Heart left ventricle (tissue), 16 donors: ENCODE measurements at regions of chr10 and their contacts with region 1.

Region 1: DNA sequence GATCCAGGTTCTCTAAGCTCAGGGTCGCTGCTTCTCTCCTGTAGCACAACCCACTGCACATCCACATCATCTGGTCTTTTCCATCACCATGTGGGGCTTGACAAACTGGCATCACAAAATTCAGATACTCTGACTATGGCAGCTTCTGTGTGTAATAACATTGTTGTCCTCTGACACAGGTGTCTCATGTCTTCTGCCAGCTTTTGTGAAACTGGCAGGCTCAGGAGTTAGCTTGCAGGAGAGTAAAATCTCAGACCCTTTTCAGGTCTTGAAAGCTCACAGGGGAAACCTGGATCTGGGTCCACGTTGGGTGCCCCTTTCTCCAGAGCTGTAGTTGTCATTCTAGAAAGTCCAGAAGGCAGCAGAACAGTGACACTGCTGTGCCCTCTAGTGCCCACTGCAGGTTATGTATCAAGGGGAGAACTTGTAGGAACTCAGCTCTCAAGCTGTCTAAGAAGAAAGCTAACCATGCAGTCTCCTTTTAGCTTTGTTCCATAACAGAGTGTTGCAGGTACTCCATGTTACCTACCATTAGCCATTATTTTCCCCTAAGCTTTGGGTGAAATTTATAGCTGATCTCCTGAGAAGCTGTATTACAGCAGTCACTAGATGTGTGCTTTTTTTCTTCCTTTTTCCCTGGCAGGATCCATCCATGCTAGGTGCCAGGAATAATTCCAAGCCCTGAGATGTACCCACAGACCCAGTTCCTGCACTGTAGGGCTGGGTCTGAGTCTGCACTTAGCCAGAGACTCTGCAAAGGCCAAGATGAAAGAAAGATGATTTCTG is 102.7 kb downstream of the ZNF248 start:
- DNase-seq: no peak
- ATAC-seq: peak in 3 of 4 donors; percentile 63 to 73 (median 64)
- H3K4me3 ChIP-seq: no peak overlapping the region
- H3K27ac ChIP-seq: no peak overlapping the region
- H3K4me1 ChIP-seq: no peaks in the 10 kb centered on the region
- H3K27me3 ChIP-seq: no peaks in the 10 kb centered on the region
- CTCF ChIP-seq: peak; percentile 36 to 63 (median 50)
- POLR2A ChIP-seq: no peak

Region 2: DNA sequence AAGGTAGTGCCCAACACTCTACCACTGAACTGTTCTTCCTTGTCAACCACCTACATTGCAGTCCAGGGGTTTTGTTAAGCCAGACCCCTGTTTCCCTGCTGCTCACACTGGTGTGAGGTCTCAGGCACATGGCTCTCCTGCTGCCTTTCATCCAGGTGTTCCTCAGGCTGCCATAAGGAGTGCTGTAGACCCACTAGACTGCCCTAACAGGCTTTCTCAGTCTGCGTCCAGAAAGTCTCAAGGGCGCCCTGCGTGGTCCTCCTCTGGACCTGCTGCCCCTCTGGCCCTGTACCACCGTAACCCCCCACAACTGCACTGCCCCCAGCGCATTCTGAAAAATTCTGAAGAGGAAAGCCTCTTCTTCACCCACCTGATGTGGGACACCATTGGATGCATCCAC is 855.1 kb before region 1 on chr10:
- intact Hi-C with region 1: loop called in 5 of 10 experiments (anchors 5 to 10 kb)
- DNase-seq: no peak
- ATAC-seq: no peak
- H3K4me3 ChIP-seq: no peak overlapping the region
- H3K27ac ChIP-seq: no peak overlapping the region
- H3K4me1 ChIP-seq: no peaks in the 10 kb centered on the region
- H3K27me3 ChIP-seq: no peaks in the 10 kb centered on the region
- CTCF ChIP-seq: no peak
- POLR2A ChIP-seq: no peak

Region 3: GRCh38 chr10:37434091-37434490 is 320.6 kb before region 1 on chr10:
- intact Hi-C with region 1: loop called in 8 of 10 experiments (anchors 2 to 10 kb)
- DNase-seq: no peak
- ATAC-seq: no peak
- H3K4me3 ChIP-seq: no peak overlapping the region
- H3K27ac ChIP-seq: no peak overlapping the region
- H3K4me1 ChIP-seq: no peaks in the 10 kb centered on the region
- H3K27me3 ChIP-seq: peaks cover 0 to 6% (median 0%) of the 10 kb centered on the region in 9 donors
- CTCF ChIP-seq: peak in 9 of 12 donors; percentile 13 to 48 (median 34)
- POLR2A ChIP-seq: no peak

Region 4: DNA sequence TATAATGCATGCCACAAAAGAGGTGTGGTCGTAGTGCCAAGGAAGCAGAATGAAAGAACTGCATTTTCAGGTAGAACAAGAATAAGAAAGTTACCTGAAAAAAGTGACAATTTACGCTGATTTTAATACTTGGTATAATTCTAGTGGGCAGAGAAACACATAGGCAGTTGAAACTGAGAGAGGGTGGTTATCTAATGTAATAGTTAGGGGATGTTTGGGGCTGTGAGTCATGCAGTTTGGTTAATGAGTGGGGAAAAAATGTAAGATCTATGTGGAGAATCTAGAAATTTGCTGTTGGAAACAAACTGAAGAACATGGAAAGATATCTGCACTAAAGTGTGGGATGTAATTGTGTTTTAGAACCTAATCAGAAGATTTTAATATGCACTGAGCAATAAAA is 373.1 kb after region 1 on chr10:
- intact Hi-C with region 1: no loop called
- DNase-seq: no peak
- ATAC-seq: no peak
- H3K4me3 ChIP-seq: no peak overlapping the region
- H3K27ac ChIP-seq: no peak overlapping the region
- H3K4me1 ChIP-seq: no peaks in the 10 kb centered on the region
- H3K27me3 ChIP-seq: no peaks in the 10 kb centered on the region
- CTCF ChIP-seq: no peak
- POLR2A ChIP-seq: no peak